ENCODE measurements at regions of chrX and their contacts with region 1.

Region 1: DNA sequence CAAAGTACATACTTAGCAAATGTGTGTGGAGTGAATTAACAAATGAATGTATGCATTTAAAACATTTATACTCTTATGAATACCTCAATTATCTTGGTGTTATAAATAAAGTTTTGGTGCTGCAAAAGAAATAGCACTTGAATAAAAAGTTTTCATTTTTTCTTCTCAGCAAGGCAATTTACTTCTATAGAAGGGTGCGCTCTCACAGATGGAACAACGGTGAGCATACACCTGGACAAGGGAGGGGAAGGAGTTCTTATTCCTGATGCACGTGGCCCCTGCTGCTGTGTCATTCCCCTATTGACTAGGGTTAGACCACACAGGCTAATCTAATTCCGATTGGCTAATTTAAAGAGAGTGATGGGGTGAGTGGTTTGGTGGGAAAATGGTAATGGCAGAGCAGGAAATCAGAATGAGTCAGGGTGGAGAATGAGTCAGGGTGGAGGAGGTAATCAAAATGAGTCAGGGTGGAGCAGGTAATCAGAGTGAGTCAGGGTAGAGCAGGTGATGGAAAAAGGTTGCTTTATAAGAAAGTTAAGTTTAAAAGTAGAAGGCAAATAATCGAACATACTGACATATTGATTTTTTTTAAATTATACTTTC is 28.2 kb upstream of the PGK1 start:
- DNase-seq: no peak
- ATAC-seq: no peak
- H3K4me3 ChIP-seq: no peak overlapping the region
- H3K4me3 Mint-ChIP-seq: no peak overlapping the region
- H3K27ac ChIP-seq: no peak overlapping the region
- H3K27ac Mint-ChIP-seq: no peak overlapping the region
- H3K4me1 ChIP-seq: peaks cover 12% of the 10 kb centered on the region
- H3K4me1 Mint-ChIP-seq: peaks cover 10 to 12% of the 10 kb centered on the region in 2 donors
- H3K27me3 ChIP-seq: no peaks in the 10 kb centered on the region
- H3K27me3 Mint-ChIP-seq: peaks cover 3 to 5% of the 10 kb centered on the region in 2 donors
- CTCF ChIP-seq: no peak

Region 2: DNA sequence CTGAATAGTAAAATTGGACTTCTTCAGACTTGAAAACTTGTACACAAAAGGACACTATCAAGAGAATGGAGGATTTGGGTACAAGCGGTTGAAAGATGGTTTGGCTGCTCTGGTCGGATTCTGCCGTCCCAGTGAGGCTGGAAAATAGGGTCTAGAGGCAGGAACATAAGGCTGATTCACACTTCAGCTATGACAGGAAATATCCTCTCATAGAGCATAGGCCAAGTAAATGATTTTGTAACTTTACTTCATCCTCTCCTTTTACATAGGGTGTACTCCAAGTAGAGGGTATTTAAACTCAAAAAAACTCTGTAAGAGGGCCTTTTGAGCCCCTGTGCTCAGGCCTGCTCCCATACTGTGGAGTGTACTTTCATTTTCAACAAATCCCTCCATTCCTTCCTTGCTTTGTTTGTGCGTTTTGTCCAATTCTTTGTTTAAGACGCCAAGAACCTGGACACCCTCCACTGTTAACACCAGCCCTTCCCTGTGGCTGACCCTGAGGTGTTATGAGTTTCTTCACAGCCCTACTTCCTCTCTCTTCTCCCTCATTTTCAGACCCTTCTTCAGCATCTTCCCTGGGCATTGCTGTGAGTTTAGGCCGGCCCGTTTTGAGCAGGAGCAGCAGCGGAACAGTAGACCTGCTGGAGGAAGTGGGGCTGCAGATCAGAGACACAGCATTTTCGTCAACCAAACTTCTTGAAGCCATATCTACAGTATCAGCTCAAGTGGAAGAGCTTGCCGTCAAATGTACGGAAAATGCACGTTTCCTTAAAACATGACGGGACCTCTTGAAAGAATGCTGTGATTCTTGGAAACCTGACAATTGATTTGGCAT is 113.6 kb before region 1 on chrX:
- intact Hi-C with region 1: no loop called
- DNase-seq: peak in 1 of 2 donors; percentile 39
- ATAC-seq: peak in 2 of 3 donors; percentile 44 to 55
- H3K4me3 ChIP-seq: no peak overlapping the region
- H3K4me3 Mint-ChIP-seq: peak overlapping the region; percentile 74
- H3K27ac ChIP-seq: no peak overlapping the region
- H3K27ac Mint-ChIP-seq: peak overlapping the region; percentile 84 to 94
- H3K4me1 ChIP-seq: peaks cover 7% of the 10 kb centered on the region
- H3K4me1 Mint-ChIP-seq: peaks cover 38 to 42% of the 10 kb centered on the region in 2 donors
- H3K27me3 ChIP-seq: no peaks in the 10 kb centered on the region
- H3K27me3 Mint-ChIP-seq: no peaks in the 10 kb centered on the region
- CTCF ChIP-seq: no peak

Region 3: GRCh38 chrX:78103623-78104446 is 27.9 kb after region 1 on chrX and contains the start of gene PGK1:
- intact Hi-C with region 1: loop called (anchors 1 kb)
- DNase-seq: peak; percentile 88 to 96
- ATAC-seq: peak; percentile 93 to 99 (median 93)
- H3K4me3 ChIP-seq: peak within 1 kb of the TSS; percentile 100
- H3K4me3 Mint-ChIP-seq: peak within 1 kb of the TSS; percentile 88
- H3K27ac ChIP-seq: peak within 1 kb of the TSS; percentile 98
- H3K27ac Mint-ChIP-seq: peak within 1 kb of the TSS; percentile 87 to 91
- H3K4me1 ChIP-seq: peaks cover 18% of the 10 kb centered on the region
- H3K4me1 Mint-ChIP-seq: peaks cover 31 to 39% of the 10 kb centered on the region in 2 donors
- H3K27me3 ChIP-seq: no peaks in the 10 kb centered on the region
- H3K27me3 Mint-ChIP-seq: no peaks in the 10 kb centered on the region
- CTCF ChIP-seq: no peak
- total RNA-seq, gene PGK1: 200 to 205 (median 203) TPM

Measured in natural killer cell (primary cell).